ENCODE measurements at regions of chr18 and their contacts with region 1.

Region 1: GRCh38 chr18:50878345-50879301 is at the start of gene ME2:
- DNase-seq: peak; percentile 94
- ATAC-seq: peak; percentile 97
- H3K4me3 Mint-ChIP-seq: peak within 1 kb of the TSS; percentile 90
- H3K27ac Mint-ChIP-seq: peak within 1 kb of the TSS; percentile 95
- H3K4me1 Mint-ChIP-seq: peaks cover 35% of the 10 kb centered on the region
- H3K27me3 Mint-ChIP-seq: peaks cover 2% of the 10 kb centered on the region
- total RNA-seq, gene ME2: 146 to 178 TPM

Region 2: GRCh38 chr18:50170004-50170403 is 708.6 kb before region 1 on chr18:
- CTCF ChIA-PET with region 1: no interaction called
- POLR2A ChIA-PET with region 1: no interaction called
- intact Hi-C with region 1: no loop called
- DNase-seq: no peak
- ATAC-seq: no peak
- H3K4me3 Mint-ChIP-seq: no peak overlapping the region
- H3K27ac Mint-ChIP-seq: no peak overlapping the region
- H3K4me1 Mint-ChIP-seq: peaks cover 3% of the 10 kb centered on the region
- H3K27me3 Mint-ChIP-seq: peaks cover 17% of the 10 kb centered on the region

Region 3: DNA sequence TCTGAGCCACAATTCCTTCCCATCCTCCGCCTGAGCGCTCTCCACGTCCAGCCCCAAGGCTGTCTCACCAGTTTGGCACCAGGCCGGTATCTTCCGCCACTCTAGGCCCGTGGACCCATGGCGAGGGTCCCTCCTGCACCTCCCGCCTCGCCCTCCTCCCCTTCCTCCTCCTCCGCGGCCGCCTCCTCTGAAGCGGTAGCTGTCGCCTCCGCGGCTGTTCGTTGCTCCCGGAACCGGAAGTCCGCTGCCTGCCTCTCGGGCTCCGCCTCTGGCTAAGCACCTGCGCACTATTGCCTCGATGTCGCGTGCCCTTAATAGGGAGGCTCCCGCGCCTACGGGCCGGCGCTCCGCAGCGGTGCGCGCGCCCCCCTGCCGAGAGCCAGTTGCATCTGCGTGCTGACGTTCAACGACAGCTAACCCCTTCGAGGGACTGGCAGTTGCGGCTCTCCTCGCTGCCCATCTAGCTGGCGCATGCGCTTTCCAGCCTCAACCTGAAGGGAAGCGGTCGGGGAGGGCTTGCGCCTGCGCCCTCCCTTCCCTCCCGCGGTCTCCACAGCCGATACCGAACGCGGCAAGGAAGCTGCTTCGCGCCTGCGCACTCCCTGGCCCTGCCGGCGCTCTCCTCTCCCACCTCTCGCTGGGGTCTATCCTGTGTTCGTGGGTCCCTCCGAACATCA is 597.2 kb before region 1 on chr18 and contains the start of gene MBD1:
- CTCF ChIA-PET with region 1: no interaction called
- POLR2A ChIA-PET with region 1: no interaction called
- intact Hi-C with region 1: loop called in 1 of 2 experiments (anchors 5 kb)
- DNase-seq: peak; percentile 97
- ATAC-seq: peak; percentile 91
- H3K4me3 Mint-ChIP-seq: peak within 1 kb of the TSS; percentile 91
- H3K27ac Mint-ChIP-seq: peak within 1 kb of the TSS; percentile 79
- H3K4me1 Mint-ChIP-seq: peaks cover 35% of the 10 kb centered on the region
- H3K27me3 Mint-ChIP-seq: no peaks in the 10 kb centered on the region
- total RNA-seq, gene MBD1: 62.2 to 70.5 TPM

Region 4: GRCh38 chr18:50819728-50820378 is 58.8 kb before region 1 on chr18 and contains the start of gene MRO:
- CTCF ChIA-PET with region 1: interaction called, 4 read pairs
- POLR2A ChIA-PET with region 1: no interaction called
- intact Hi-C with region 1: loop called (anchors 2 to 5 kb)
- DNase-seq: peak; percentile 88
- ATAC-seq: peak; percentile 100
- H3K4me3 Mint-ChIP-seq: no peak within 1 kb of the TSS
- H3K27ac Mint-ChIP-seq: no peak within 1 kb of the TSS
- H3K4me1 Mint-ChIP-seq: no peaks in the 10 kb centered on the region
- H3K27me3 Mint-ChIP-seq: peaks cover 14% of the 10 kb centered on the region
- total RNA-seq, gene MRO: not detected

Region 5: GRCh38 chr18:50967714-50968661 is 89.4 kb after region 1 on chr18 and contains the start of gene ELAC1:
- CTCF ChIA-PET with region 1: no interaction called
- POLR2A ChIA-PET with region 1: interaction called, 4 read pairs
- intact Hi-C with region 1: loop called (anchors 1 kb)
- DNase-seq: peak; percentile 76
- ATAC-seq: peak; percentile 91
- H3K4me3 Mint-ChIP-seq: peak within 1 kb of the TSS; percentile 76
- H3K27ac Mint-ChIP-seq: peak within 1 kb of the TSS; percentile 94
- H3K4me1 Mint-ChIP-seq: peaks cover 30% of the 10 kb centered on the region
- H3K27me3 Mint-ChIP-seq: no peaks in the 10 kb centered on the region
- total RNA-seq, gene ELAC1: 4.7 to 5.6 TPM

Region 6: GRCh38 chr18:51051105-51051712 is 172.6 kb after region 1 on chr18:
- CTCF ChIA-PET with region 1: interaction called, 3 read pairs
- POLR2A ChIA-PET with region 1: no interaction called
- intact Hi-C with region 1: loop called in 1 of 2 experiments (anchors 2 kb)
- DNase-seq: no peak
- ATAC-seq: peak; percentile 89
- H3K4me3 Mint-ChIP-seq: no peak overlapping the region
- H3K27ac Mint-ChIP-seq: peak overlapping the region; percentile 42
- H3K4me1 Mint-ChIP-seq: peaks cover 34% of the 10 kb centered on the region
- H3K27me3 Mint-ChIP-seq: no peaks in the 10 kb centered on the region

Region 7: GRCh38 chr18:51197661-51198424 is 319.2 kb after region 1 on chr18 and contains the start of gene MEX3C:
- CTCF ChIA-PET with region 1: no interaction called
- POLR2A ChIA-PET with region 1: no interaction called
- intact Hi-C with region 1: loop called (anchors 1 to 2 kb)
- DNase-seq: peak; percentile 100
- ATAC-seq: peak; percentile 86
- H3K4me3 Mint-ChIP-seq: peak within 1 kb of the TSS; percentile 95
- H3K27ac Mint-ChIP-seq: peak within 1 kb of the TSS; percentile 96
- H3K4me1 Mint-ChIP-seq: peaks cover 25% of the 10 kb centered on the region
- H3K27me3 Mint-ChIP-seq: no peaks in the 10 kb centered on the region
- total RNA-seq, gene MEX3C: 46.7 to 66.9 TPM